ENCODE measurements at regions of chr11 and their contacts with region 1.

Region 1: GRCh38 chr11:128956401-128957201 is 13.9 kb upstream of the TP53AIP1 start:
- DNase-seq: peak in 4 of 35 experiments; percentile 3 to 65 (median 17)
- ATAC-seq: peak in 1 of 4 experiments; percentile 42
- H3K4me3 ChIP-seq: no peak overlapping the region
- H3K4me3 Mint-ChIP-seq: peak overlapping the region in 1 of 3 donors; percentile 4
- H3K27ac ChIP-seq: no peak overlapping the region
- H3K27ac Mint-ChIP-seq: no peak overlapping the region
- H3K4me1 ChIP-seq: no peaks in the 10 kb centered on the region
- H3K4me1 Mint-ChIP-seq: peaks cover 0 to 2% (median 2%) of the 10 kb centered on the region in 3 donors
- H3K27me3 ChIP-seq: peaks cover 0 to 10% of the 10 kb centered on the region in 2 experiments
- H3K27me3 Mint-ChIP-seq: peaks cover 17 to 20% of the 10 kb centered on the region in 2 donors

Region 2: GRCh38 chr11:128884703-128885338 is 71.8 kb before region 1 on chr11:
- CTCF ChIA-PET with region 1: interaction called, 20 to 41 read pairs
- POLR2A ChIA-PET with region 1: no interaction called
- DNase-seq: peak in 26 of 35 experiments; percentile 22 to 82 (median 40)
- ATAC-seq: peak; percentile 70 to 81 (median 76)
- H3K4me3 ChIP-seq: no peak overlapping the region
- H3K4me3 Mint-ChIP-seq: no peak overlapping the region
- H3K27ac ChIP-seq: no peak overlapping the region
- H3K27ac Mint-ChIP-seq: peak overlapping the region in 1 of 2 donors; percentile 43
- H3K4me1 ChIP-seq: peaks cover 0 to 6% of the 10 kb centered on the region in 2 experiments
- H3K4me1 Mint-ChIP-seq: peaks cover 0 to 8% (median 0%) of the 10 kb centered on the region in 3 donors
- H3K27me3 ChIP-seq: peaks cover 11 to 56% of the 10 kb centered on the region in 2 experiments
- H3K27me3 Mint-ChIP-seq: peaks cover 61 to 80% of the 10 kb centered on the region in 2 donors

Region 3: GRCh38 chr11:128988242-128988970 is 31.8 kb after region 1 on chr11:
- CTCF ChIA-PET with region 1: no interaction called
- POLR2A ChIA-PET with region 1: no interaction called
- DNase-seq: no peak
- ATAC-seq: no peak
- H3K4me3 ChIP-seq: no peak overlapping the region
- H3K4me3 Mint-ChIP-seq: no peak overlapping the region
- H3K27ac ChIP-seq: no peak overlapping the region
- H3K27ac Mint-ChIP-seq: no peak overlapping the region
- H3K4me1 ChIP-seq: no peaks in the 10 kb centered on the region
- H3K4me1 Mint-ChIP-seq: peaks cover 0 to 5% (median 0%) of the 10 kb centered on the region in 3 donors
- H3K27me3 ChIP-seq: no peaks in the 10 kb centered on the region
- H3K27me3 Mint-ChIP-seq: no peaks in the 10 kb centered on the region